Naive thymus-derived CD4-positive, alpha-beta T cell (primary cell): ENCODE measurements at regions of chr3 and their contacts with region 1.

Region 1: DNA sequence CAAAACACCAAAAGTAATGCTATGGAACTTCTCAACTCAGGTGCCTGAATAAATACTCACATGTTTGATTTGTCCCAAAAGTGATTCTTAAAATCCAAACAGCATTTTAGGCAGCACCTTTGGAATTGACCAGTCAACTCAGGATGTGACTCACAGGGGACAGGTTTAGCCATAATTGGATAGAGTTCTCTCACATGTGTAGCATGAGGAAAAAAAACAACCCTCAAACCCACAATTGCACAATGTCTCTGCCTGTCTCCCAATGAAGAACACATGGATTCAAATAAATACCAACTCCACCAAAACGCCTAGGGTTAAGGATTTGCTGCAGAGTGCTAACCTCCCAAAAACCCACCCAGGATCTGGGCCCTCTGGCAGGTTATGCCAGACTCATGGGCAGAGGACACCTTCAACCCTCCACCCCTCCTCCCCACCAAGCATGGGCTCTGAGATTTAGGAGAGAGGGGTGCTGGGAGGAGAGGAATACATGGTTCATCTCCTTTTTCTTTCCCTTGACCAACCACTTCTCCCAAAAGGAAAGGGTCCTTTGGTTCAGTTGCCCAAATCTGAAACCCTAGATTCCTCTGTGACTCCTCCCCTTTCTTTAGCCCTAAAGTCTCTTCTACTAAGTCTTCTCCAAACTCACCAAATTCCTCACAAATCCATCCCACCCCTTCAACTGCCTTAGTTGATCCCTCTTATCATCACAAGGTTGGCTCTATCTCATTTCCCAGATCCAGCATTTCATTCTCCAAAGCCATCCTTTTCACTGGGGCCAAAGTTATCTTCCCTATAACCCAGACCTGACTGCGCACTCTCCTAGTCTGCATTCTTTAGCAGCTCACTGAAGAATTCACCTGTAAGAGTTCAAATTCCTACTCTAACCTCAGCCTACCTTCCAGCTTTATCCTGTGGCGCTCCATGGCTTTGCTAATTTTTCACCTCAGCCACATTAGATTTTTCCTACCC is 7.7 kb downstream of the RYK start:
- DNase-seq: no peak
- ATAC-seq: no peak
- H3K4me3 ChIP-seq: no peak overlapping the region
- H3K4me3 Mint-ChIP-seq: peak overlapping the region in 7 of 10 donors; percentile 0 to 46 (median 25)
- H3K27ac ChIP-seq: no peak overlapping the region
- H3K27ac Mint-ChIP-seq: peak overlapping the region in 2 of 9 donors; percentile 14 to 57
- H3K4me1 ChIP-seq: peaks cover 5 to 16% of the 10 kb centered on the region in 2 donors
- H3K4me1 Mint-ChIP-seq: peaks cover 7 to 93% (median 85%) of the 10 kb centered on the region in 7 donors
- H3K27me3 ChIP-seq: no peaks in the 10 kb centered on the region
- H3K27me3 Mint-ChIP-seq: peaks cover 0 to 26% (median 0%) of the 10 kb centered on the region in 5 donors

Region 2: DNA sequence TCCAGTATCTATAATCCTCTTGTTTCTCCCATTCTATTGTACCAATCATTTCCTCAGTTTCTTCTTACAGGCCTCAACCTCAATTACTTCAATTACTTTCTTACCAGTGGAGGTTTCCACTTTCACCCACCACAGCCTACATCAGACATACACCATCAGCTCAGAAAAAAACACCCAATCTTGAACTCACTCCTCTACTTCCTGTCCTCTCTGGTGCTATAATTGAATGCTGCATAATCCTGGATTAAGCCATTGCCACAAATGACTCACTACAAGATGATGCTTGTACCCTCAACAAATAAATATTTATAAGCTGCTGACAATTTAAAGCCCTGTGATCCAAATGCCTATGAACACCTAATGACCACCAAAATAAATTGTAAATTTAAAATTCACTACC is 10.8 kb before region 1 on chr3:
- CTCF ChIA-PET with region 1: no interaction called
- POLR2A ChIA-PET with region 1: no interaction called
- intact Hi-C with region 1: loop called in 1 of 2 experiments (anchors 1 kb)
- DNase-seq: no peak
- ATAC-seq: peak; percentile 56
- H3K4me3 ChIP-seq: no peak overlapping the region
- H3K4me3 Mint-ChIP-seq: peak overlapping the region in 6 of 10 donors; percentile 29 to 53 (median 40)
- H3K27ac ChIP-seq: no peak overlapping the region
- H3K27ac Mint-ChIP-seq: peak overlapping the region in 4 of 9 donors; percentile 4 to 78 (median 16)
- H3K4me1 ChIP-seq: peaks cover 12 to 13% of the 10 kb centered on the region in 2 donors
- H3K4me1 Mint-ChIP-seq: peaks cover 18 to 97% (median 79%) of the 10 kb centered on the region in 7 donors
- H3K27me3 ChIP-seq: no peaks in the 10 kb centered on the region
- H3K27me3 Mint-ChIP-seq: peaks cover 0 to 16% (median 0%) of the 10 kb centered on the region in 5 donors